ENCODE measurements at regions of chr3 and their contacts with region 1.

Region 1: DNA sequence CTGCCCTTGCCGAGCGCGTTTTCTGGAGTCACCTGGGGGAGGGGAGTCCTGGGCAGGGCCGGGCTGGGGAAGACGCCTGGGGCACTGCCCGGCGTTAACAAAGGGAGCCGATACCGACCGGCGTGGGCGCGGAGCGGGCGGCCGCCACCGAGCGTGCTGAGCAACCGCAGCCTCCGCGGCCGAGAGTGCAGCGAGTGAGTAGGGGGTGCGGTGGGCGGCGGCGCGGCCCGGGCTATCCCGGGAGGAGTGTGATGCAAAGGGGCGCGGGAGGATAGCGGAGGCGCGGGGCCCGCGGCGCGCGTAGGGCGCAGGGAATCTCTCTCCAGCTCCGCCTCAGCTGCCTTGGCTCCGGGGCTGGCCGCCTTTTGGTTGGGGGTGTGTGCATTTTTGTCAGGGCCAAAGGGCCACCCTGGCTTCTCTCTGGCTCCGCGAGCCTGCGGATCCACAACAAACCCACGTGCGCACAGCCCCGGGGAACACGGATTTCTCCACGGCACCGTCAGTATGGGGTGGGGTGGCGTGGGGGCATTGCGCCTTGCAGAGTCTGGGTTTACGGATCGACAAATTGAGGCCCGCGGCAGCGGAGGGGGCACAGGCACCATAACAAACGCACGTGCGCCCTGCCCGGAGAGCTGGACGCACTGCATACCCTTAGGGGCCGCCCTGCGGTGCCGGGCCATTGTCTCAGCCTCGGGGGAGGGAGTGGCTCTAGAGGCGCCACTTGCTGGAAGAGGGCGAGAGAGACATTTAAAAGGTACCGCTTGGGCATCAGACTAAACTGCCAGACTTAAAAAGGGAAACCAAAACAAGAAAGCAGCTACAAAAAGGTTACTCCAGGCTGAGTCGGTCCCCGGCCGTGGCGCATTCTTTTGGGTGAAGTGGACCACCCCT is 560 bp downstream of the ST6GAL1 start:
- DNase-seq: peak; percentile 62 to 82
- ATAC-seq: peak; percentile 79 to 86 (median 85)
- H3K4me3 ChIP-seq: peak overlapping the region; percentile 99
- H3K27ac ChIP-seq: peak overlapping the region; percentile 89
- H3K4me1 ChIP-seq: peaks cover 27% of the 10 kb centered on the region
- H3K27me3 ChIP-seq: no peaks in the 10 kb centered on the region
- CTCF ChIP-seq: peak; percentile 14

Region 2: DNA sequence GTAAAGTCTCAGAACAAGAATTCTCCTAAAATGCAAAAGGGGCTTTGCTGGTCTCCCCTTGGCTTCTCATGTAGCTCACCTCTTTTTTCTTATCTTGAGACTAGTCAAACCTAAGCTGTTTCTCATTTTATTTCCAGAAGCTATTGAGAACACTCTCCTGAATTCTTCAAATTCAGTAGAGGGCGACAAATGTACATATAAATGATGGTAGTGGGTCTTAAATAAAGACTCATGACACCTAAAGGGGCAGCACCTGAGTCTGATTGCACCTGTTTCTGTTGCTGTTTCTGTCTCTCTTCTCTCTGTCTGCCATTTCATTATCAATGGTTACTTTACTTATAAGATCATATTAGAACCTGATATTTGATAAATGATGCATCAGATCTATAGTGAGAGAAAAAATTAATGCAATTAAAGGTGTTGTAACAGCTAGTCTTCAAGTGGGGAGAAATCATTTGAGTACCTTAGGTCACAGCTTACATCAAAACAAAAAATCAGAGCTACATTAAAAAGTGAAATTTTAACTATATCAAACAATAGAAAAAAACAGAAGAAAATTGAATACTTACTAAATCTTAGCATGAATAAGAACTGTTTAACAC is 81.4 kb before region 1 on chr3:
- intact Hi-C with region 1: loop called (anchors 2 to 5 kb)
- DNase-seq: no peak
- ATAC-seq: peak; percentile 48 to 91 (median 88)
- H3K4me3 ChIP-seq: no peak overlapping the region
- H3K27ac ChIP-seq: no peak overlapping the region
- H3K4me1 ChIP-seq: no peaks in the 10 kb centered on the region
- H3K27me3 ChIP-seq: peaks cover 0 to 13% (median 0%) of the 10 kb centered on the region in 3 donors
- CTCF ChIP-seq: peak; percentile 58

Region 3: GRCh38 chr3:186976837-186977750 is 46.2 kb after region 1 on chr3:
- intact Hi-C with region 1: loop called (anchors 5 kb)
- DNase-seq: peak; percentile 77 to 92
- ATAC-seq: peak; percentile 93 to 96 (median 95)
- H3K4me3 ChIP-seq: peak overlapping the region; percentile 51
- H3K27ac ChIP-seq: peak overlapping the region; percentile 96
- H3K4me1 ChIP-seq: peaks cover 57% of the 10 kb centered on the region
- H3K27me3 ChIP-seq: no peaks in the 10 kb centered on the region
- CTCF ChIP-seq: peak; percentile 32

Region 4: GRCh38 chr3:187130346-187131066 is 199.6 kb after region 1 on chr3:
- intact Hi-C with region 1: no loop called
- DNase-seq: no peak
- ATAC-seq: peak in 1 of 4 donors; percentile 40
- H3K4me3 ChIP-seq: no peak overlapping the region
- H3K27ac ChIP-seq: no peak overlapping the region
- H3K4me1 ChIP-seq: no peaks in the 10 kb centered on the region
- H3K27me3 ChIP-seq: no peaks in the 10 kb centered on the region
- CTCF ChIP-seq: no peak